ENCODE measurements at regions of chr6 and their contacts with region 1.

Region 1: GRCh38 chr6:32853541-32854375 is at the starts of genes PSMB9 and TAP1:
- DNase-seq: peak; percentile 96
- H3K4me3 ChIP-seq: peak within 1 kb of the TSS; percentile 63 to 83 (median 75)
- H3K27ac ChIP-seq: peak within 1 kb of the TSS; percentile 18
- H3K4me1 ChIP-seq: peaks cover 13% of the 10 kb centered on the region
- H3K27me3 ChIP-seq: peaks cover 2 to 15% of the 10 kb centered on the region in 2 experiments
- CTCF ChIP-seq: peak; percentile 82 to 86
- POLR2A ChIP-seq: peak; percentile 64
- total RNA-seq, gene PSMB9: 2.7 and 6.3 TPM in 2 replicates
- total RNA-seq, gene TAP1: 18.8 and 25.9 TPM in 2 replicates

Region 2: DNA sequence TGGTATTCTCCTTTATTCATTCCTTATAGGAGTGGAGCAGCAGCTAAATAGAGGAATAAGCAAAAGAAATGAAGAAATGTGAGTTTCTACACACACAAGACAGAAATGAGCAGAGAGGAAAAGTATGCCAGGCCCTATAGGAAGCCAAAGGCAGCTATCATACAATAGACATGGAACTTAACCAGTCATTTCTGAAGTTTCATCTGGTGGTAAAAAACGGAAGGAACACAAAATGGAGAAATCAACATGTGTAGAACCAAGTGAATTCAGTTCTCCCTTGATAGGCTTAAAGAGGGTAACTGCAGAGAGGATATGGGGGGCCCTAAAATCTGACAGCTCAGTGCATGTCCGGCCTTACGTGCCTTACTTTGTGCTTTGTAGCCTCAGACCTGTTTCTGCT is 526.7 kb before region 1 on chr6:
- CTCF ChIA-PET with region 1: no interaction called
- POLR2A ChIA-PET with region 1: no interaction called
- dilution Hi-C with region 1: no loop called
- intact Hi-C with region 1: no loop called
- DNase-seq: no peak
- H3K4me3 ChIP-seq: no peak overlapping the region
- H3K27ac ChIP-seq: no peak overlapping the region
- H3K4me1 ChIP-seq: no peaks in the 10 kb centered on the region
- H3K27me3 ChIP-seq: peaks cover 15 to 18% of the 10 kb centered on the region in 2 experiments
- CTCF ChIP-seq: no peak
- POLR2A ChIP-seq: no peak

Region 3: GRCh38 chr6:32825966-32826365 is 27.8 kb before region 1 on chr6:
- CTCF ChIA-PET with region 1: interaction called, 35 read pairs
- POLR2A ChIA-PET with region 1: no interaction called
- dilution Hi-C with region 1: no loop called
- intact Hi-C with region 1: loop called (anchors 1 kb)
- DNase-seq: peak; percentile 48
- H3K4me3 ChIP-seq: no peak overlapping the region
- H3K27ac ChIP-seq: no peak overlapping the region
- H3K4me1 ChIP-seq: no peaks in the 10 kb centered on the region
- H3K27me3 ChIP-seq: no peaks in the 10 kb centered on the region
- CTCF ChIP-seq: peak; percentile 13 to 20
- POLR2A ChIP-seq: no peak

Measured in endothelial cell of umbilical vein (primary cell).